GM18951 (cell line): ENCODE measurements at regions of chr6 and their contacts with region 1.

Region 1: GRCh38 chr6:36139429-36139828 is 9.1 kb downstream of the MAPK13 start:
- POLR2A ChIP-seq: no peak

Region 2: GRCh38 chr6:36169023-36170007 is 29.9 kb after region 1 on chr6:
- in situ Hi-C with region 1: loop called (anchors 5 kb)
- POLR2A ChIP-seq: no peak

Region 3: DNA sequence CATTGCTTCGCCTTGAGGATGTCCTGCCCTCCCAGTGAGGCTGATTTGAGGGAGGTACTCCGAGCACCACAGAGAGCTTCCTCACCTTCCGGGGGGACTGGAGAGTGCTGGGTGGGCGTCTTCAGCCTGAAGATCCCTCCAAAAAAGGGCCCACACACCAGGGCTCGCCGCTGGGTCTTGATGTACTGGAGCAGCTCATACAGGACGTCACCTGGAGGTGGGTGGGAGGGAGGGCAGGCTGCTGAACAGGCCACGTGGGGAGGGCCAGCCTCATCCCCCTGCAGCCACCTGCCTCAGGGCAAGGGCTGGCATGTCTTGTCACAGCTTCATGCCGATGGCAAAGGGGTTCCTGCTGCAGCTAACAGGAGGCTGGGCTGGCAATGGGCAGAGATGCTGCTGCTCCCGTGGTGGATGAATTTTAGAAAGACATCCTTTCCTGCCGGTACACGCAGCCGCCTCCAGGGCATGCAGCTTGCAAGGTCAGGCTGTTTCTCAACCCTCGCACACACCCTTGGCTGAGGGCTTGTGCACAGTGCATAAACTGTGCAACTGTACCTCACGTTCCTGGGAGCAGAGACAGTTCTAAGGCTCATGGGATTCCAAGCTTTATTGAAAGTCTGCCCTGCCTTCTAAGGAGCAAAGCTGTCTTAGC is 234.1 kb after region 1 on chr6:
- in situ Hi-C with region 1: no loop called
- POLR2A ChIP-seq: no peak